Breast epithelium (tissue), 4 donors: ENCODE measurements at regions of chr4 and their contacts with region 1.

Region 1: DNA sequence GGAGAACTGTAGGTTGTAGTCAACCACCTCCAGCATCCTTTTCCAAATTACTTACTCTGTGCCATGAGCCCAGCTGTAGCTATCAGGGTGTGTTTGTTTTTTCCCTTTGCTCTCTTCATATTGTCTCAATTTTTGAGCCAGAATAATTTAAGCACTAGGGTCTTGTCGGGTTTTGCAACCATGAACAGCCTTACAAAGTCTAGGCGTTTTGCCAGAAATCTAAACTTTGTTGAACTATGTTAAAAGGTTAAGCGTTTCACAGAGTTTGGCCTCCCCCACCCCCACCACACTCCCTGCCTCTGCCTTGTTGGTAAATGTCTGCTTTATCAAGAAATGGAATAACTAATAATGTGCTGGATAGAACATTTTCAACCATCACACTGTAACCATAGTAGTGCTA is 190.6 kb upstream of the TTC29 start:
- DNase-seq: no peak
- H3K4me3 ChIP-seq: no peak overlapping the region
- H3K27ac ChIP-seq: peak overlapping the region in 1 of 2 donors; percentile 52
- H3K4me1 ChIP-seq: no peaks in the 10 kb centered on the region
- H3K27me3 ChIP-seq: no peaks in the 10 kb centered on the region
- CTCF ChIP-seq: no peak
- POLR2A ChIP-seq: no peak

Region 2: GRCh38 chr4:146577111-146577510 is 559.2 kb before region 1 on chr4:
- intact Hi-C with region 1: loop called (anchors 5 kb)
- DNase-seq: no peak
- H3K4me3 ChIP-seq: no peak overlapping the region
- H3K27ac ChIP-seq: no peak overlapping the region
- H3K4me1 ChIP-seq: no peaks in the 10 kb centered on the region
- H3K27me3 ChIP-seq: no peaks in the 10 kb centered on the region
- CTCF ChIP-seq: no peak
- POLR2A ChIP-seq: no peak